Calu3 (cell line): ENCODE measurements at regions of chr16 and their contacts with region 1.

Region 1: DNA sequence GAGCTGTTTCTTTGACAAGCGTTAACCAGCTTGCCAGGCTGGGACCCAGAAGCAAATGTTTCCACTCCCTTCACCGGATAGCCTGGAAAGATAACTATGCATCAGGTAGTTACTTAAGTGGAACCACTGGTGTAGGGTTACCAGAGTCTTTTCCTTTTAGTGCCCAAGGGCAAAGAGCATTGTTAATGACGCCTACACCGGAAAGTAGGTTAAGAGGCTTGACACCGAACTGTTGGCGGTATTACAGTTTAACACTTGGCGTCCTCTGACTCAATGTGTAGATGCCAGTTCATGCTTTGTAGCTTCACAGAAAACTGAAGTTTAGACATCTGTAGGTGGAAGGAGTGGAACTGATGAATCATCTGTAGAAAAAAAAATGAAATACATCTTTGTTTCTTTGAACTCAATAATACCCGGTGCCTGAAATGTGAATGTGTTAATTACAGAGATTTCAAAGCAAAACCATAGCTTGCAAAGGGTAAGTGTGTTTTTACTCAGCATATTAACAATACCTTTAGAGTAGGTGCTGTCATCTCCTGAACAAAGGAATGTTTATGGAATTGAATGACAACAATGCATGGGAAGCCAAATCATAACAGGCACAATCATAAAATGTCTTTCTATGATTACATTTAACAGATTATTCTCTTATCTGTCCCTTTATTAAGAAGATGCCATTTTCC is 426.7 kb upstream of the SALL1 start:
- DNase-seq: peak; percentile 47
- H3K4me3 Mint-ChIP-seq: no peak overlapping the region
- H3K27ac Mint-ChIP-seq: no peak overlapping the region
- H3K4me1 Mint-ChIP-seq: peaks cover 12% of the 10 kb centered on the region
- H3K27me3 Mint-ChIP-seq: peaks cover 14% of the 10 kb centered on the region
- CTCF ChIP-seq: no peak

Region 2: DNA sequence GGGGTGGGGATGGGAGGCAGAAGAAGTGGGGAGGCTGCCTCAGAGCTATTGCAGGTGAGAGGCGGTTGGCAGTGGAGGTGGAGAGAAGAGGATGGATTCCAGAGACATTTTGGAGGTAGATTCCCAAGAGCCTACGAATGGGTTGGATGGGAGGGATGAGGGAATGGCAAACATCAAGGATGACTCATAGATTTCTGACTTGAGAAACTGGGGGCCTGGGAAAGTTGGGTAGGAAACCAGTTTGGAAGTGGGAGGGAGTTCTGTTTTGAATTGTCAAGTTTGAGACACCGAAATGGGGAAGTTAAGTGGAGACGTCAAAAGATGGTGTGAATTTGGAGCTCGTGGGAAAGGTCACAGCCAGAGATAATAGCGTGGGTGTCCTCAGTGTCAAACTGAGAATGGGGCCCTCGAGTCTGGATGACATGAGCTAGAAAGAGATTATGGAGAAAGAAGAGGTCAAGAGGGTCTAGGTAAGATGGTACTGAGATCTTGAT is 842.1 kb before region 1 on chr16:
- CTCF ChIA-PET with region 1: no interaction called
- intact Hi-C with region 1: loop called (anchors 10 kb)
- DNase-seq: no peak
- H3K4me3 Mint-ChIP-seq: no peak overlapping the region
- H3K27ac Mint-ChIP-seq: no peak overlapping the region
- H3K4me1 Mint-ChIP-seq: no peaks in the 10 kb centered on the region
- H3K27me3 Mint-ChIP-seq: peaks cover 62% of the 10 kb centered on the region
- CTCF ChIP-seq: no peak

Region 3: DNA sequence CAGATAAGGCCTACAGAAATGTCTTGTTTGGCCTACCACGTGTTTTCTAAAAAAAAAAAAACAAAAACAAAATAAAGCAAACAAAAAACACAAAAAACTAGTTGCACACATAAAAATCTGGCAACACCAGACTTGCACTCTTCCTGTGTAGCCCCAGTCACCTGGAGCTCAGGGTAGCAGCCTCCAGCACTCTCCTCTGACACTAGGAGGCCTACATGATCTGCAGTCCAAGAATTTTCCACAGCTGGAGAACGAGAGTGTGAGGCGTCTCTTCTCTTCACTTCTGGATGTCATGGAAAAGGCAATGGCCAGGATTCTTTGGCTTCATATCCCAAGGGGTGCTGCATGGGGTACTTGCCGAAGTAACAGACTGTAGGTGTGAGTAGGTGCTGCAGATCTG is 116.5 kb before region 1 on chr16:
- CTCF ChIA-PET with region 1: no interaction called
- intact Hi-C with region 1: no loop called
- DNase-seq: no peak
- H3K4me3 Mint-ChIP-seq: no peak overlapping the region
- H3K27ac Mint-ChIP-seq: no peak overlapping the region
- H3K4me1 Mint-ChIP-seq: no peaks in the 10 kb centered on the region
- H3K27me3 Mint-ChIP-seq: no peaks in the 10 kb centered on the region
- CTCF ChIP-seq: no peak